GM12878 (cell line): ENCODE measurements at regions of chr1 and their contacts with region 1.

Region 1: GRCh38 chr1:149962123-149962548 is 25.5 kb upstream of the MTMR11 start:
- DNase-seq: peak; percentile 34
- ATAC-seq: peak; percentile 92
- H3K4me3 ChIP-seq: no peak overlapping the region
- H3K27ac ChIP-seq: peak overlapping the region; percentile 2
- H3K4me1 ChIP-seq: peaks cover 4% of the 10 kb centered on the region
- H3K27me3 ChIP-seq: no peaks in the 10 kb centered on the region
- CTCF ChIP-seq: peak; percentile 50 to 73 (median 71); a peak in 5 of 6 replicates
- EP300 ChIP-seq: no peak
- POLR2A ChIP-seq: no peak
- RAD21 ChIP-seq: peak; percentile 90

Region 2: DNA sequence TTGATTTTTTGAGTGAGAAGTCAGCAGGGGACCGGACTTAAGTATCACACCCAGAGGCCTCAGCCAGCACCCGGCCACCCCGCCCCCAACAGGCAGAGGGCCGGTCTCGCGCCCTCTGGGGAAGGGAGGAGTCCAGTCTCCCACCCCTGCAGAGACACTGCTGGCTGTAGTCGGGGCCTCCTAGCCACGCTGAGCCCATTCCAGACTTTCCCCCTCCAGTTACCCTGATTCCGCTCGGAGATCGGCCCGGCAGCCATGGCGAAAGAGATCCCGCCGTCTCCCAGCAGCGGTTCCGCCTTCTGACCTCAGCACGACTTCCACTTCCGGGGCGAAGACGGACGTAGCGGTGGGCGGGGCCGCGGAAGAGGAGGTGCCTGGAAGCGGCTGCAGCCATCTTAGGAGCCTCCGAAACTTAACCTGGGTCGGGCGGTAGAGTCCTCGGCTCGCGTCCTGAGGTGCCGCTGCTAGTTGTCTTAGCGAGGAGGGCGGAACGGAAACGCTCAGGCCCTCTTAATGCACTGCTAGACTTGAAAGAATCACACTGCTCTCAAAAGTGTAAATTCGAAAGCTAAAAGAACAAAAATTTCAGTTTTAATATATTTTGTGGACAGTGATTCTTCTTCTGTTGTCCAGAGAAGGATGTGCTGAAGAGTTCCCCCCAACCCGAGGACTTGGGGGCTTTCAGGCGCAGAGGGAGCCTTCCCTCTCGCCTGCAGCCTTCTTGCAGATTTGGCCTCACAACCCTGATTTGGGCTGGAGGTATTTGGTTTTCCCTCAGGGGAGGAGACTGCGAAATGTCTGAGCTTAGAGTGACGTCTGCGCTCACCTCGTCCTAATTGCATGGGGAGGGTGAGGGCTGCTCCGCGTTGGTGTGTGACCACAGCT is 34.4 kb before region 1 on chr1 and contains the start of gene SF3B4:
- CTCF ChIA-PET with region 1: interaction called, 11 read pairs
- POLR2A ChIA-PET with region 1: no interaction called
- RAD21 ChIA-PET with region 1: no interaction called
- SMC1A ChIA-PET with region 1: interaction called, 3 read pairs
- in situ Hi-C with region 1: no loop called
- intact Hi-C with region 1: no loop called
- DNase-seq: peak; percentile 72
- ATAC-seq: peak; percentile 98
- H3K4me3 ChIP-seq: peak within 1 kb of the TSS; percentile 99
- H3K27ac ChIP-seq: peak within 1 kb of the TSS; percentile 92
- H3K4me1 ChIP-seq: peaks cover 10% of the 10 kb centered on the region
- H3K27me3 ChIP-seq: no peaks in the 10 kb centered on the region
- CTCF ChIP-seq: 0 out of 6 replicates have a peak, but pooled peaks of 1 of the 3 experiments have one; percentile 12
- EP300 ChIP-seq: no peak
- POLR2A ChIP-seq: peak; percentile 95
- RAD21 ChIP-seq: no peak
- polyA plus RNA-seq, gene SF3B4: 1.9 to 6.9 TPM

Region 3: GRCh38 chr1:150010393-150011115 is 48.4 kb after region 1 on chr1 and contains the start of gene OTUD7B:
- CTCF ChIA-PET with region 1: interaction called, 22 read pairs
- POLR2A ChIA-PET with region 1: no interaction called
- RAD21 ChIA-PET with region 1: interaction called, 4 read pairs
- SMC1A ChIA-PET with region 1: interaction called, 6 read pairs
- in situ Hi-C with region 1: no loop called
- intact Hi-C with region 1: loop called (anchors 5 kb)
- DNase-seq: no peak
- ATAC-seq: peak; percentile 91
- H3K4me3 ChIP-seq: peak within 1 kb of the TSS; percentile 99
- H3K27ac ChIP-seq: peak within 1 kb of the TSS; percentile 84
- H3K4me1 ChIP-seq: no peaks in the 10 kb centered on the region
- H3K27me3 ChIP-seq: no peaks in the 10 kb centered on the region
- CTCF ChIP-seq: 0 out of 6 replicates have a peak, but pooled peaks of 2 of the 3 experiments have one; percentile 2 to 3
- EP300 ChIP-seq: peak in 1 of 2 experiments; percentile 28; a peak in 1 of 4 replicates
- POLR2A ChIP-seq: peak; percentile 85
- RAD21 ChIP-seq: no peak
- polyA plus RNA-seq, gene OTUD7B: 1.7 to 1.8 TPM

Region 4: GRCh38 chr1:150053926-150054325 is 91.8 kb after region 1 on chr1:
- CTCF ChIA-PET with region 1: interaction called, 69 read pairs
- POLR2A ChIA-PET with region 1: no interaction called
- RAD21 ChIA-PET with region 1: interaction called, 43 read pairs
- SMC1A ChIA-PET with region 1: interaction called, 51 read pairs
- in situ Hi-C with region 1: loop called (anchors 5 kb)
- intact Hi-C with region 1: loop called (anchors 1 kb)
- DNase-seq: no peak
- ATAC-seq: no peak
- H3K4me3 ChIP-seq: no peak overlapping the region
- H3K27ac ChIP-seq: no peak overlapping the region
- H3K4me1 ChIP-seq: peaks cover 4% of the 10 kb centered on the region
- H3K27me3 ChIP-seq: no peaks in the 10 kb centered on the region
- CTCF ChIP-seq: no peak
- EP300 ChIP-seq: no peak
- POLR2A ChIP-seq: no peak
- RAD21 ChIP-seq: no peak

Region 5: GRCh38 chr1:150072959-150073358 is 110.8 kb after region 1 on chr1:
- CTCF ChIA-PET with region 1: interaction called, 14 read pairs
- POLR2A ChIA-PET with region 1: interaction called, 4 read pairs
- RAD21 ChIA-PET with region 1: interaction called, 10 read pairs
- SMC1A ChIA-PET with region 1: interaction called, 4 read pairs
- in situ Hi-C with region 1: no loop called
- intact Hi-C with region 1: no loop called
- DNase-seq: no peak
- ATAC-seq: peak; percentile 85
- H3K4me3 ChIP-seq: no peak overlapping the region
- H3K27ac ChIP-seq: no peak overlapping the region
- H3K4me1 ChIP-seq: no peaks in the 10 kb centered on the region
- H3K27me3 ChIP-seq: no peaks in the 10 kb centered on the region
- CTCF ChIP-seq: peak in 2 of 3 experiments; percentile 27 to 42; a peak in 2 of 6 replicates
- EP300 ChIP-seq: no peak
- POLR2A ChIP-seq: no peak
- RAD21 ChIP-seq: peak; percentile 42; the same call in 1 of the 2 replicates

Region 6: DNA sequence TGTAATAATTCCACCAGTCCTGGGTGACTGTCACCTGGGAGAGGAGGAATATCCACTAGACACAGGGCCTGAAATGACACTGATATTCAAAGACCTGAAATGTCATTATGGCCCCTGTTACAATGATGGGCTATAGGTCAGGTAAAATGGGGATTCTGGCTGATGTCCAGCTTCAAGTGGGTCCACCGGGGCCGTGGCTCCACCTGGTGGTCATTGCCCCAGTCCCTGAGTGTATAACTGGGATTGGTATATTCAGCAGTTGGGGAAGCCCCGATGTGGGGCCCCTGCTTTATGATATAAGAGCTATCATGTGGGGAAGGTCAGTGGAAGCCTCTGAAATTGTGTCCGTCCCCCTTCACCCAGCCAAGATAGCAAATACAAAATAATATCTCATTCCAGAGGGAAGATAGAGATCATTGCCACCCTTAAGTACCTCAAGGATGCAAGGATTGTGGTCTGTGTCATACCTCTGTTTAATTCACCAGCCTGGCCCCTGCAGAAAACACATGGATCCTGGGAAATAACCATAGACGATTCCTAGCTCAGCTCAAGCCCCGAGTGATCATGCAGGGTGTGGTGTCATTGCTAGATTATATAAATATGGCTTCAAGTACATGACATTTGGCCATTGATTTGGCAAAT is 206.9 kb after region 1 on chr1:
- CTCF ChIA-PET with region 1: interaction called, 35 read pairs
- POLR2A ChIA-PET with region 1: interaction called, 3 read pairs
- RAD21 ChIA-PET with region 1: interaction called, 19 read pairs
- SMC1A ChIA-PET with region 1: interaction called, 15 read pairs
- in situ Hi-C with region 1: loop called (anchors 5 kb)
- intact Hi-C with region 1: loop called (anchors 1 kb)
- DNase-seq: no peak
- ATAC-seq: peak; percentile 78
- H3K4me3 ChIP-seq: no peak overlapping the region
- H3K27ac ChIP-seq: no peak overlapping the region
- H3K4me1 ChIP-seq: peaks cover 28% of the 10 kb centered on the region
- H3K27me3 ChIP-seq: no peaks in the 10 kb centered on the region
- CTCF ChIP-seq: peak; percentile 77 to 88 (median 87)
- EP300 ChIP-seq: no peak
- POLR2A ChIP-seq: no peak
- RAD21 ChIP-seq: peak; percentile 94